ENCODE measurements at regions of chr12 and their contacts with region 1.

Region 1: DNA sequence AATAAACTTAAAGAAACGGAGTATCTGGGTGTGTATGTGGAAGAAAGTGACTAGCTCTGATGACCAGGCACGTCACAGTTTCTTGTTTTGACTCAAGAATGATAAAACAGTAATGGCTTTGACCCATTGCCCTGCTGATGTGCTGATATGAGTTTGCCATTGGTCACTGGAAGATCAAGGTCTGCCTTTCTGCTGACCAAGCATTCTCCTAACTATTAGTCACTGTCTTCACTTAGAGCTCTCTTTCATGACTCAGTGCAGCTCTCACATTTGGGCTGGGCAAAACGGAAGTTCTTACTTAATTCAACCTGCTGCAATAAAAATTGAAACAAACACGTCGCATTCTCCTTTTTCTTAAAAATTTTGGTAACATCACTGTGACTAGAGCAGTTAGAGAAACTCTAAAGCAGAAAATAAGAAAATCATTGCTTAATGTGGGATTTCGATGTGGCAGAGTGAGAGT is 366.7 kb downstream of the BTG1 start:
- DNase-seq: peak; percentile 68
- H3K4me3 Mint-ChIP-seq: peak overlapping the region; percentile 58
- H3K27ac Mint-ChIP-seq: peak overlapping the region; percentile 77
- H3K4me1 Mint-ChIP-seq: peaks cover 46% of the 10 kb centered on the region
- H3K27me3 Mint-ChIP-seq: no peaks in the 10 kb centered on the region

Region 2: GRCh38 chr12:91577586-91578539 is 201.1 kb before region 1 on chr12:
- CTCF ChIA-PET with region 1: no interaction called
- intact Hi-C with region 1: loop called (anchors 2 kb)
- DNase-seq: no peak
- H3K4me3 Mint-ChIP-seq: peak overlapping the region; percentile 71
- H3K27ac Mint-ChIP-seq: peak overlapping the region; percentile 61
- H3K4me1 Mint-ChIP-seq: peaks cover 19% of the 10 kb centered on the region
- H3K27me3 Mint-ChIP-seq: no peaks in the 10 kb centered on the region

Region 3: GRCh38 chr12:91877022-91877421 is 98.1 kb after region 1 on chr12:
- CTCF ChIA-PET with region 1: no interaction called
- intact Hi-C with region 1: loop called (anchors 1 kb)
- DNase-seq: peak; percentile 94
- H3K4me3 Mint-ChIP-seq: peak overlapping the region; percentile 67
- H3K27ac Mint-ChIP-seq: peak overlapping the region; percentile 94
- H3K4me1 Mint-ChIP-seq: peaks cover 67% of the 10 kb centered on the region
- H3K27me3 Mint-ChIP-seq: no peaks in the 10 kb centered on the region

Region 4: DNA sequence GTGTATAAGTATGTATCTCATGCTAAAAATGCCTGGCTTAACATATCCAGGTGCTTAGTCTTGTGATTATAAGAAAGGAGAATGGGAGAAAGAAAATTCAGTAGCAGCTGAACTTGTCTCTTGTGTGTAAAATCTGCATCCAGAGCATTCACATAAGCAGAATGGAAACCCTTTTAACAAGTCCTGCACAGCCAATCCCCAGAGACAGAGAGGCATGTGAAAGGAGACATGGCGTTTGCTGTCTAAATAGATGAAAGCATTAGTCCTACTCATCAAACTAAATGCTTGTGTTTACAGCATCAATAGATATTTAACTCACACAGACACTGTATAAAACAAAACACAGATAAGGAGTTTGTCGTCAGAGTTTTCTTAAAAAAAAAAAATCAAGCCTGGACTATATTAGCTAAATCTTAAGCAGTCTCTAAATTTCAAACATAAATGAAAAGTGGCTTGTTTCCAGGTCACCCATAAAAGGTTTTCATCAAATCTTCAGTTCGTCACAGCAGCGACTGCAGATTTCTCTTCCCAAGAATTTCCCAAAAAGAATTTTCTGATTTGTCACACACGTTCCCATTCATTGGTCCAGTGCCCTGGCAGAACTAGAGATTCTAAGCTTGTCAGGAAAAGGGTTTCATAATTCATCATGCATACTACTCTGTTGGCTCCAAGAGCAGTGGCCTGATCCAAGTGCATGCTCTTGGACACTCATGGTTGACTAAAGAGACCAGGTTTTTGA is 117.5 kb after region 1 on chr12:
- CTCF ChIA-PET with region 1: no interaction called
- intact Hi-C with region 1: no loop called
- DNase-seq: no peak
- H3K4me3 Mint-ChIP-seq: no peak overlapping the region
- H3K27ac Mint-ChIP-seq: no peak overlapping the region
- H3K4me1 Mint-ChIP-seq: peaks cover 12% of the 10 kb centered on the region
- H3K27me3 Mint-ChIP-seq: no peaks in the 10 kb centered on the region

Region 5: DNA sequence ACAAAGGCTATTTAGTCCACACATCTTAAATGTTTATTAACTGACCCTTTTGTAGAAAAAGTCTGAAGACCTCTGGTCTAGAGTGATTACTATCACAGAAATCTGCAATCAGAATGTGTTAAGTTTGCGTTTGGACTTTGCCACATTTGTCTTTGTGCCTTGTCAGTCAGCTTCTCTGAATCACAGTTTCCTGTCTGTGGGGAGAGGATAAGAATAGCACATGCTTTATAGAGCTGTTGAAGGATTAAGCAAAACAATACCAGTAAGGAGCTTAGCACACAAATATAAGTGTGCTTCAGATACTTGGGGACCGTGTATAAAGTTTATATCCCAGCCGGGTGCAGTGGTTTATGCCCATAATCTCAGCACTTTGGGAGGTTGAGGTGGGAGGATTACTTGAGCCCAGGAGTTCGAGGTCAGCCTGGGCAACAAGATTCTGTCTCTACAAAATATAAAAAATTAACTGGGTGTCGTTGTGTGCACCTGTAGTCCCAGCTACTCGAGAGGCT is 429.7 kb after region 1 on chr12:
- CTCF ChIA-PET with region 1: no interaction called
- intact Hi-C with region 1: loop called (anchors 2 kb)
- DNase-seq: peak; percentile 42
- H3K4me3 Mint-ChIP-seq: peak overlapping the region; percentile 66
- H3K27ac Mint-ChIP-seq: peak overlapping the region; percentile 86
- H3K4me1 Mint-ChIP-seq: peaks cover 45% of the 10 kb centered on the region
- H3K27me3 Mint-ChIP-seq: no peaks in the 10 kb centered on the region

Region 6: GRCh38 chr12:92469837-92470236 is 690.9 kb after region 1 on chr12:
- CTCF ChIA-PET with region 1: no interaction called
- intact Hi-C with region 1: loop called (anchors 1 kb)
- DNase-seq: no peak
- H3K4me3 Mint-ChIP-seq: no peak overlapping the region
- H3K27ac Mint-ChIP-seq: peak overlapping the region; percentile 89
- H3K4me1 Mint-ChIP-seq: peaks cover 49% of the 10 kb centered on the region
- H3K27me3 Mint-ChIP-seq: no peaks in the 10 kb centered on the region